ENCODE measurements at regions of chr17 and their contacts with region 1.

Region 1: DNA sequence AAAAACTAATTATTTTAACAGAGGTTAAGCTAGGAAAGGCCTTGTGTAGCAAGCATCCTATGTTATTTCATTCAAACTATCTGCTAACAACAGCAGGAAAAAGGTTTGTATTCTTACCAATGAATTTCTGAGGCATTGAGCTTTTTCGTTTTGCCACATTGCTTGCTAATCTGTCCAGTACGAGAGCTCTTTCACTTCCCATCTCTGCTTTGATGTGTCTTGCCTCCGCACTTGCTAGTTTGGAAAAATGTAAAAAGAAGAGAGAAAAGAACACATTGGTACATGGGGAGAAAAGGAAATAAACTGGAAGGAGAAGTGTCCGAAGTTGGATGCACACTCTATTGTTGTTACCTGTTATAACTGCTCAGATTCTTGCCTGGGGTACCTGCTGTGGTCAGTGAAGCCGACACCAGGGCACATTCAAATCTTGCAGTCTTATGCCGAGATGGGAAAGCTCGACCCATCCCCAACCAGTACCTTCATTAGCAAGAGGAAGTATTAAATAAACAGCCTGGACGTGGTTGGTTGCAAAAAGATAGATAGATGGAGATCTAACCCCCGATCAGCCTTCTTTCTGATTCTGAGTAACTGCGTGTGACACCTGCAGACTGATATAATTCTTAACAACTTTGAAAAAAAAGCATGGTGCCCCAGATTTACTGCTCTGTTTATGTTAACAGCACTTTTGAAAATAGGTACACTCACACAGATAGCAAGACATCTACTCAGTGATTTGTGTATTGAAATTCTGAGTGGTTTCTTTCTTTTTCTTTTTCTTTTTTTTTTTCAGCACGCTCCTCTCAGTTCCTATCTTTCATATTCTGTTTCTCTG is 40.0 kb downstream of the GRB7 start:
- DNase-seq: no peak
- H3K4me3 Mint-ChIP-seq: no peak overlapping the region
- H3K27ac Mint-ChIP-seq: no peak overlapping the region
- H3K4me1 Mint-ChIP-seq: peaks cover 48% of the 10 kb centered on the region
- H3K27me3 Mint-ChIP-seq: no peaks in the 10 kb centered on the region
- CTCF ChIP-seq: no peak

Region 2: GRCh38 chr17:39027455-39028035 is 750.2 kb before region 1 on chr17:
- CTCF ChIA-PET with region 1: no interaction called
- intact Hi-C with region 1: no loop called
- DNase-seq: peak; percentile 45
- H3K4me3 Mint-ChIP-seq: peak overlapping the region; percentile 70
- H3K27ac Mint-ChIP-seq: no peak overlapping the region
- H3K4me1 Mint-ChIP-seq: peaks cover 7% of the 10 kb centered on the region
- H3K27me3 Mint-ChIP-seq: peaks cover 76% of the 10 kb centered on the region
- CTCF ChIP-seq: no peak

Region 3: GRCh38 chr17:39318636-39319035 is 459.1 kb before region 1 on chr17:
- CTCF ChIA-PET with region 1: no interaction called
- intact Hi-C with region 1: no loop called
- DNase-seq: no peak
- H3K4me3 Mint-ChIP-seq: no peak overlapping the region
- H3K27ac Mint-ChIP-seq: no peak overlapping the region
- H3K4me1 Mint-ChIP-seq: no peaks in the 10 kb centered on the region
- H3K27me3 Mint-ChIP-seq: no peaks in the 10 kb centered on the region
- CTCF ChIP-seq: no peak

Region 4: DNA sequence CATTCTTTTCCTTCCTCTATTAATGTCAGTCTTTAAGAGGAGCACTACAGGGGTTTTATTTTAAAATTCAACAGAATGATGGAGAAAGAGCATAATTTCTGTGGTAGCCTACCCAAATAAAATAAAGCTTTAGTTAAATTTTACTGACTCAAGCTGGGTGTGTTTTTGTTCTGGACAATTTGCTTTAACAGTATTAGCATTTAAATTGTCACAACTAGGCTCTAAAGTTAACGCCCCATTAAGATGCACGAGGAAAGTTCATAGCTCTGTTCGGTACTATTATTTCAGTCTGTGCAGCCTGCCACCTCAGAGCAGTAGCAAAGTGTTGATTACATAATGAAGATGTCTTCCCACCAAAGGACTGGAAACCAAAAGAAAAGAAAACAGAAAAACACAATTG is 264.4 kb before region 1 on chr17:
- CTCF ChIA-PET with region 1: no interaction called
- intact Hi-C with region 1: no loop called
- DNase-seq: no peak
- H3K4me3 Mint-ChIP-seq: no peak overlapping the region
- H3K27ac Mint-ChIP-seq: no peak overlapping the region
- H3K4me1 Mint-ChIP-seq: no peaks in the 10 kb centered on the region
- H3K27me3 Mint-ChIP-seq: no peaks in the 10 kb centered on the region
- CTCF ChIP-seq: no peak

Region 5: DNA sequence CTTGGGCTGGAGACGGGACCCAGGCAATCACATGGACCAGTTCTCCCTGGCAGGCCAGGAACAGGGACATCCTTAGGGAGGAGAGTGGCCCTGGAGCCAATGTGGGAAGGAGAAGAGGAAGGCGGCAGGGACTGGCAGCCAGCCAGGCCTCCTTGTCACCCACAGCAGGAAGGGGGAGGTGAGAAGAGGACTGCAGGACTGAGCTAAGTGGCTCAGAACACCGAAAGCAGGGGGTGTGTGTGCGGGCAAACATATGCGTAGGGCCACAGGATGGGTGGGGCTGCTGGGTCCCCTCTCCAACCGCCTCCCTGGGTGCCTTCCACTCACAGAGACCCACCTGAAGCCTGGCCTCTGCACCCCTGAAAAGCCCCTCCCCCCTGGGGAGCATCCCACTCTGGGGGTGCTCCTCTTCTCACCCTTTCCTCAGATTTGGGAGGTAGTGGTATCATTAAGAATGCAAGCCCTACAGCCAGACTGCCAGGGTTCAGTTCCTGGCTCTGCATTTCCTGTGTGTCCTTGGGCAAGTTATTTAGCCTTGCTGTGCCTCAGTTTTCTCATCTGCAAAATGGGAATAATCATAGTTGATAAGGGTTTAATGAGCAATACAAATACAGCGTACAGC is 101.4 kb before region 1 on chr17:
- CTCF ChIA-PET with region 1: interaction called, 34,714 read pairs
- intact Hi-C with region 1: loop called (anchors 1 kb)
- DNase-seq: peak; percentile 100
- H3K4me3 Mint-ChIP-seq: peak overlapping the region; percentile 3
- H3K27ac Mint-ChIP-seq: peak overlapping the region; percentile 62
- H3K4me1 Mint-ChIP-seq: peaks cover 91% of the 10 kb centered on the region
- H3K27me3 Mint-ChIP-seq: peaks cover 6% of the 10 kb centered on the region
- CTCF ChIP-seq: no peak

Region 6: DNA sequence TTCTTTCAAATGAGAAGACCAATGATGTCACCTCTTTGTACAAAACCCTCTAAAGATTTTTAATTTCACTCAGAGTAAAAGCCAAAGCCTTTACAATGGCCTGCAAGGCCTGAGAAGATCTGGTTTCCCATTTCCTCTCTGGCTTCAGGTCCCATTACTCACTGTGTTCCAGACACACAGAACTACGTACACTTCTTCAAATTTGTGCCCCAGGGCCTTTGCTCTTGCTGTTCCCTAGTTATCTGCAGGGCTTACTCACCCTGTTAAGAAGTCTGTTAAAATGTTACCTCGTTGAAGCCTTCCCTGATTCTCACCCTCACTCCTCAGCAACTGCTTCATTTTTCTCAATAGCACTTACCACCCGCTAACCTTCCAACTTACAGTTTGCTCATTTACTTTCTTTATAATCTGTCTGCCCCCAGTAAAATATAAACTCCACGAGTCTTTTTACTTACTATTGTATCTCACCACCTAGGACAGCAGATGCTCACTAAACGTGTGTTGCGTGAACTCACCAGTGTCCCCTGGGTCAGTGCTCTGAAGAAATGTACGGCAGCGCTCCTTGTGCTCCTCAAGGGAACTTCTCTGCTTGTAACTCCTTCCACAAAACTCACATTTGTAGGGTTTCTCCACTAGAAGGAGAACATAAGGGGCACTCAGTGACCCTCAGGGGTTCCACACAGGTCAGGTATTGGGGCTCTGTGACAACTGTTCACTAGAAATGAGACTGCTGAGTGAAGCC is 10.2 kb after region 1 on chr17:
- CTCF ChIA-PET with region 1: interaction called, 577 read pairs
- intact Hi-C with region 1: no loop called
- DNase-seq: peak; percentile 80
- H3K4me3 Mint-ChIP-seq: no peak overlapping the region
- H3K27ac Mint-ChIP-seq: no peak overlapping the region
- H3K4me1 Mint-ChIP-seq: peaks cover 29% of the 10 kb centered on the region
- H3K27me3 Mint-ChIP-seq: no peaks in the 10 kb centered on the region
- CTCF ChIP-seq: no peak

Region 7: GRCh38 chr17:39828443-39828842 is 50.7 kb after region 1 on chr17:
- CTCF ChIA-PET with region 1: interaction called, 920 read pairs
- intact Hi-C with region 1: loop called (anchors 1 kb)
- DNase-seq: peak; percentile 100
- H3K4me3 Mint-ChIP-seq: peak overlapping the region; percentile 36
- H3K27ac Mint-ChIP-seq: peak overlapping the region; percentile 48
- H3K4me1 Mint-ChIP-seq: peaks cover 17% of the 10 kb centered on the region
- H3K27me3 Mint-ChIP-seq: no peaks in the 10 kb centered on the region
- CTCF ChIP-seq: no peak

Region 8: DNA sequence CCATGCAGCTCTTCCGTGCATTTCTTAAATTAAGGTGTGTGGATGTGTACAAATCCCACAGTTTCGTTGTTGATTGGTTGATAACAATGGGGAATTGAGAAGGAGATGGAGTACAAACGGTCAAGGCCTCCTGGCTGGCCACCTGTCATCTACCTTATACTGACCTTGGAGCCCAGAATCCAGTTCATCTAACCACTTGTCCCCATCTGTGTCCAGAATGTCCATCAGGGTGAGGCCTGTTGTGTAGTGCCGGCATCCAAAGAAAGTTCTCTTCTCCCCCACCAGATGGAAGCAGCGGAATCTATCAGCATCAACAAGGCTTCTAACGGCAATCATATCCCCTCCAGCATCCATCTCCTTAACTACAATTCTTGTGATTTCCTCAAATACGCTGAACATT is 139.2 kb after region 1 on chr17:
- CTCF ChIA-PET with region 1: interaction called, 1,212 read pairs
- intact Hi-C with region 1: loop called (anchors 1 kb)
- DNase-seq: peak; percentile 94
- H3K4me3 Mint-ChIP-seq: no peak overlapping the region
- H3K27ac Mint-ChIP-seq: no peak overlapping the region
- H3K4me1 Mint-ChIP-seq: peaks cover 24% of the 10 kb centered on the region
- H3K27me3 Mint-ChIP-seq: no peaks in the 10 kb centered on the region
- CTCF ChIP-seq: no peak

Region 9: GRCh38 chr17:40005520-40005919 is 227.8 kb after region 1 on chr17:
- CTCF ChIA-PET with region 1: interaction called, 11 read pairs
- intact Hi-C with region 1: no loop called
- DNase-seq: no peak
- H3K4me3 Mint-ChIP-seq: no peak overlapping the region
- H3K27ac Mint-ChIP-seq: no peak overlapping the region
- H3K4me1 Mint-ChIP-seq: no peaks in the 10 kb centered on the region
- H3K27me3 Mint-ChIP-seq: peaks cover 21% of the 10 kb centered on the region
- CTCF ChIP-seq: no peak

Region 10: DNA sequence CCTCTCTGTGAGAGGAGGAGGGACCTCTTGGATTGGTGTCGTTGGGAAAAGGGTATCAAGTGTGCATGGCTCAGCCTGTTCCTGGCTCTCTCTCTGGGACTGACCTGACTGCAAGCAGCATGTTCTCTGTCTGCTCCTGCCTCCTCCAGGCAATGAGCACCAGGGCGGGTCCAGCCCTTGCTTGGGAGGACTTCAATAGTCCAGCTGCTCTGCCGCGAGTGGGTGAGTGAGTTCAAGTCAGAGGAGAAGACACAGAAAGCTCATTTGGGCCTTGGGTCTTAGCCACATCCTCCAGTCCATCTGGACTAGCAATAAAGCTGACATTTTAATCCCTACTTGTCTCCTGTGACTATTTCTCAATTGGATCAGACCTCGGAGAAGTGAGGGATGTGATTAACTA is 748.9 kb after region 1 on chr17:
- CTCF ChIA-PET with region 1: no interaction called
- intact Hi-C with region 1: no loop called
- DNase-seq: no peak
- H3K4me3 Mint-ChIP-seq: no peak overlapping the region
- H3K27ac Mint-ChIP-seq: no peak overlapping the region
- H3K4me1 Mint-ChIP-seq: peaks cover 13% of the 10 kb centered on the region
- H3K27me3 Mint-ChIP-seq: peaks cover 42% of the 10 kb centered on the region
- CTCF ChIP-seq: no peak